H1 (cell line): ENCODE measurements at regions of chr3 and their contacts with region 1.

Region 1: GRCh38 chr3:126134219-126134975 is 46.0 kb downstream of the ALDH1L1 start:
- DNase-seq: peak in 1 of 2 experiments; percentile 87
- H3K4me3 ChIP-seq: no peak overlapping the region
- H3K27ac ChIP-seq: no peak overlapping the region
- H3K4me1 ChIP-seq: peaks cover 0 to 21% (median 8%) of the 10 kb centered on the region in 4 experiments; a peak in 6 of 7 replicates
- H3K27me3 ChIP-seq: peaks cover 0 to 3% (median 1%) of the 10 kb centered on the region in 4 experiments; a peak in 5 of 7 replicates
- CTCF ChIP-seq: peak in 2 of 3 experiments; percentile 76 to 80; a peak in 3 of 4 replicates
- EP300 ChIP-seq: no peak
- POLR2A ChIP-seq: no peak
- RAD21 ChIP-seq: peak; percentile 95 to 97

Region 2: DNA sequence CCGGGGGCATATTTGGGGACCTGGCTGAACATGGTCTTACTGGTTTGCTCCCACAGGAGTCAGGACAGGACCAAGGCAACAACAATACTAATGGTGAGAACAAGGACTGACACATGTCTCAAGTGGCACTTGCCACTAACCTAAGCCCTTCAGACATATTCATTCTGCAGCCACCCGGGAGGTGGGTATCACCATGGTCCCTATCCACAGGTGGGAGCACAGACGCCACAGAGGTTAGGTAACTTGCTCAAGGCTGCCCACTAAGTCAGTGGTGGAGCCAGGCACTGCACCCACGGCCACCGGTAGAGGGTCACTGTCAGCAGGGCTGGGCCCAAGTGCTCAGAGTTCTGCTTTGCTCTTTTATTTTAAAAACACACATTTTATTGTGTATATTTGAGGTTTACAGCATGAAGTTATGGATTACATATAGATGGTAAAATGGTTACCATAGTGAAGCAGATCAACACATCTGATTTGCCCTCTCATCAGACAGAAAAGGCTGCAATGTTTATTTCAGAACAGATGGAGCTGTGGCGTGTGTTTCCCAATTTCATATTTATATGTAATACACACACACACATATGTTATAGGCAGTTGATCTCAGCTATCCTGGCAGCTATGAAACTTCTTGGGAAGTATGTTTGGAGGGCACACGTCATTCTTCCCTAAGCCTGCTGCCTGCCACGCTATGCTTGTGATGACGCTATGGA is 20.5 kb before region 1 on chr3:
- CTCF ChIA-PET with region 1: interaction called, 52 read pairs
- POLR2A ChIA-PET with region 1: no interaction called
- DNase-seq: no peak
- H3K4me3 ChIP-seq: no peak overlapping the region
- H3K27ac ChIP-seq: no peak overlapping the region
- H3K4me1 ChIP-seq: no peaks in the 10 kb centered on the region
- H3K27me3 ChIP-seq: no peaks in the 10 kb centered on the region
- CTCF ChIP-seq: peak in 2 of 3 experiments; percentile 57 to 66; a peak in 3 of 4 replicates
- EP300 ChIP-seq: no peak
- POLR2A ChIP-seq: no peak
- RAD21 ChIP-seq: peak; percentile 54 to 56; a peak in 3 of 4 replicates

Region 3: DNA sequence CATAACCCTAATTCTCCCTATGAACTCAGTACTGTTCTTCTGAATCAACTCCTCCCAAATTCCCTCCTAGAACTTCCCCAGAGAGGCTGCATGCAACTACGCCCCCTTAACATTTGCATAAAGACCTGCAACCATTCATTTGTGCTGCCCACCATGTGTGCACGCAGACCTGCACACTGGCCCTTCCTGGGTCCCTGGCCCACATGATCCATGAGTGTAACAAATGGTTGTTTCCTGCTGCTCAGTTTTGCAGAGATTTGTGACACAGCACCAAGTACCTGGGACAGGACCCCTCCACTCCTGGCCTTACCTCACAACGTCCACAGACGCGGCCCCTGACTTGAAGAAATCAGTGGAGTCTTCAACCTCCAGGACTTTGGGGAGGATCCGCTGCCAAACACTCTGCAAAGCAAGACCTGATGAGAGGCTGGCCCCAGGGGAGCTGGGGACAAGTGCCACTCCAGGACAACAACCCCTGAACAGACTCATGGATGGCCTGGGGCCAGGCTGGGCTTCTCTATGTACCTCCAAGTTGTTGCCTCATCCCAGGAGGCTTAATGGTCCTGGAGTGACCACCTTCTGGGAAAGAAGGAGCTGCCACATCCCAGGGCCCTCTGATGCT is 12.2 kb after region 1 on chr3:
- CTCF ChIA-PET with region 1: interaction called, 58 read pairs
- POLR2A ChIA-PET with region 1: no interaction called
- DNase-seq: no peak
- H3K4me3 ChIP-seq: no peak overlapping the region
- H3K27ac ChIP-seq: no peak overlapping the region
- H3K4me1 ChIP-seq: no peaks in the 10 kb centered on the region
- H3K27me3 ChIP-seq: no peaks in the 10 kb centered on the region
- CTCF ChIP-seq: no peak
- EP300 ChIP-seq: no peak
- POLR2A ChIP-seq: no peak
- RAD21 ChIP-seq: no peak

Region 4: GRCh38 chr3:126197854-126198584 is 63.6 kb after region 1 on chr3:
- CTCF ChIA-PET with region 1: interaction called, 43 read pairs
- POLR2A ChIA-PET with region 1: no interaction called
- DNase-seq: peak in 1 of 2 experiments; percentile 81
- H3K4me3 ChIP-seq: no peak overlapping the region
- H3K27ac ChIP-seq: no peak overlapping the region
- H3K4me1 ChIP-seq: no peaks in the 10 kb centered on the region
- H3K27me3 ChIP-seq: no peaks in the 10 kb centered on the region; a peak in 1 of 7 replicates
- CTCF ChIP-seq: peak; percentile 75 to 85 (median 79)
- EP300 ChIP-seq: no peak
- POLR2A ChIP-seq: no peak
- RAD21 ChIP-seq: peak; percentile 69 to 78

Region 5: DNA sequence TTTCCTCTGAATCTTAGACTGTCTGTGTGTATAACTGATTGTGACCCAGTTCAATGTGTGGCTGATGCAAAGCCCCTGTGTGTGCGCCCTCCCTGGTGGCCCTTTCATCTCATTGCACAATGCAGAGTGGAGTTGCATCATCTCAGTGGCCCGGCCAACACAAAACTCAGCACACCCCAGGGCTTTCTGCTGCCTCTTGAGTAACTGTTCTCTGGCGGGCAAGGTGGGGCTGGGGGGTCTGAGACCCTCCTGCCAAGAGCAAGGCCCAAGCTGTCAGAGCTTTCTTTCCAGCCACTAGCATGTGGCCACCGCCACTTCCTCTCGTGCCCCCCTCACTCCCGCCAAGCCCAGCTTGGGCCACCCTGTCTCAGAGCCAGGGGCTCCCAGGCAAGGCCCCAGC is 126.6 kb after region 1 on chr3:
- CTCF ChIA-PET with region 1: interaction called, 10 read pairs
- POLR2A ChIA-PET with region 1: interaction called, 5 read pairs
- DNase-seq: no peak
- H3K4me3 ChIP-seq: no peak overlapping the region
- H3K27ac ChIP-seq: no peak overlapping the region
- H3K4me1 ChIP-seq: peaks cover 0 to 11% (median under 1%) of the 10 kb centered on the region in 4 experiments; a peak in 5 of 7 replicates
- H3K27me3 ChIP-seq: no peaks in the 10 kb centered on the region; a peak in 2 of 7 replicates
- CTCF ChIP-seq: no peak
- EP300 ChIP-seq: no peak
- POLR2A ChIP-seq: no peak
- RAD21 ChIP-seq: no peak

Region 6: DNA sequence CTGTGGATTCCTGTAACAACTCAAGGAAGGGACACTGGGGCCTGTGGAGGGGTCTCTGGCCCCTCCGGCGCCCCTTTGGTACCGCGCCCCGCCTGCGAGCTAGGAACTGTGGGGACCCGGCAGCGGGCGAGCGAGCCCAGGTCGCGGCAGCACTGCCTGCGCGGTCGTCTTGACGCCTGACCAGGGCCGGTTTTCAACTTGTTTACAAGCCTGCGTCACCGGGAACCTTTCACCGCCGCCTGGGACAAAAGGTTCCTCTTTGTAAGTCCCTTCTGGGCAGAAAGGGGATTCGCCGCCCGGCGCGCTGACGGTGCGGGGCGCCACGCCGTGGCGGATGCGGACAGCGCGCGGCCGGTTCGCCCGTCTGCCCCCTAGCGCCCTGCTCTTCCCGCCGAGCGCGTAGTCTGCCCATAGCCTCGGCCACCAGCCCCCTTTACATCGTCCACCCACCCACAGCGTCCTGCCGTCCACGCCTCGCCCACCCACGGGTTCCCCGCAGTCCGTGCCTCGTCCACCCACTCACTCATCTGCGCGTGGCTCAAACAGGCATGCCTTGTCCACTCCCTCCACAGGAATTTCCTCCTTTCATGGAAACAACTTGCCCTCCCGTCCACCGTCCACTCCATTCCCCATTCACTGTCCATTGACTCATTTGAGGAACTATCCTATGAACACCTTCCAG is 254.9 kb after region 1 on chr3:
- CTCF ChIA-PET with region 1: interaction called, 35 read pairs
- POLR2A ChIA-PET with region 1: no interaction called
- DNase-seq: peak; percentile 79 to 86
- H3K4me3 ChIP-seq: peak overlapping the region in 2 of 4 experiments; percentile 7 to 53; a peak in 4 of 8 replicates
- H3K27ac ChIP-seq: no peak overlapping the region; the same call in 1 of the 2 replicates
- H3K4me1 ChIP-seq: peaks cover 0 to 8% (median 3%) of the 10 kb centered on the region in 4 experiments; a peak in 4 of 7 replicates
- H3K27me3 ChIP-seq: peaks cover 8 to 18% (median 17%) of the 10 kb centered on the region in 4 experiments
- CTCF ChIP-seq: peak in 2 of 3 experiments; percentile 92 to 100; a peak in 3 of 4 replicates
- EP300 ChIP-seq: peak in 1 of 2 experiments; percentile 28; a peak in 1 of 3 replicates
- POLR2A ChIP-seq: peak in 1 of 2 experiments; percentile 39; a peak in 1 of 3 replicates
- RAD21 ChIP-seq: peak; percentile 89 to 91